ENCODE measurements at regions of chr3 and their contacts with region 1.

Region 1: DNA sequence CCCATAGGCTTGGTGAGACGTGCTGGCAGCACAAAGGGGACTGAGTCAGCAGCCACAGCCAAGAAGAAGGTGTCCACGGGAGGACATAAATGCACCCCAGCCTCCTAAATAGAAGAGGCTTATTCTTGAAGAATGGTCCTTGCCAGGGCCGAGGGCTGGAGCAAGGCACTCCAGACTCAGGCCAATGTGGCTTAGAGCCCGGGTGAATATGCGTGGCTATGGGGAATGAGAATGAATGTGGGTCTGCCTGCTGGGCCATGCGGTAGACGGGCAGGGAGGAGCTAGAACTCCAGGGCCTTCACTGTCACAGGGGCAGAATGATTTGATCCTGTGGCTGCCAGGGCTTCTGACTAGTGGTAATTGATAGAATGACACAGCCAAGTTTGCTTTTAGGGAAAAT is 34.0 kb downstream of the DHX30 start:
- DNase-seq: no peak
- H3K4me3 ChIP-seq: no peak overlapping the region
- H3K27ac ChIP-seq: no peak overlapping the region
- H3K4me1 ChIP-seq: no peaks in the 10 kb centered on the region
- H3K27me3 ChIP-seq: no peaks in the 10 kb centered on the region
- CTCF ChIP-seq: no peak
- EP300 ChIP-seq: no peak
- RAD21 ChIP-seq: no peak

Region 2: GRCh38 chr3:47824541-47825473 is 12.2 kb before region 1 on chr3:
- CTCF ChIA-PET with region 1: interaction called, 44 read pairs
- POLR2A ChIA-PET with region 1: interaction called, 8 read pairs
- DNase-seq: peak; percentile 98
- H3K4me3 ChIP-seq: peak overlapping the region; percentile 74 to 95
- H3K27ac ChIP-seq: peak overlapping the region; percentile 66 to 69
- H3K4me1 ChIP-seq: peaks cover 3 to 15% of the 10 kb centered on the region in 2 experiments; a peak in 1 of 4 replicates
- H3K27me3 ChIP-seq: no peaks in the 10 kb centered on the region
- CTCF ChIP-seq: peak; percentile 78
- EP300 ChIP-seq: no peak
- RAD21 ChIP-seq: peak; percentile 25; the same call in 1 of the 2 replicates

Region 3: GRCh38 chr3:47984097-47984728 is 147.2 kb after region 1 on chr3:
- CTCF ChIA-PET with region 1: interaction called, 55 read pairs
- POLR2A ChIA-PET with region 1: no interaction called
- DNase-seq: no peak
- H3K4me3 ChIP-seq: no peak overlapping the region
- H3K27ac ChIP-seq: peak overlapping the region in 1 of 2 experiments; percentile 71; a peak in 2 of 4 replicates
- H3K4me1 ChIP-seq: peaks cover 6 to 15% of the 10 kb centered on the region in 2 experiments; a peak in 3 of 4 replicates
- H3K27me3 ChIP-seq: no peaks in the 10 kb centered on the region
- CTCF ChIP-seq: no peak
- EP300 ChIP-seq: peak in 1 of 2 experiments; percentile 28; a peak in 1 of 4 replicates
- RAD21 ChIP-seq: no peak

Region 4: GRCh38 chr3:48001991-48002390 is 165.0 kb after region 1 on chr3:
- CTCF ChIA-PET with region 1: interaction called, 10 read pairs
- POLR2A ChIA-PET with region 1: no interaction called
- DNase-seq: no peak
- H3K4me3 ChIP-seq: no peak overlapping the region
- H3K27ac ChIP-seq: no peak overlapping the region
- H3K4me1 ChIP-seq: no peaks in the 10 kb centered on the region
- H3K27me3 ChIP-seq: no peaks in the 10 kb centered on the region
- CTCF ChIP-seq: no peak
- EP300 ChIP-seq: no peak
- RAD21 ChIP-seq: no peak

Region 5: GRCh38 chr3:48157950-48158376 is 321.0 kb after region 1 on chr3:
- CTCF ChIA-PET with region 1: interaction called, 85 read pairs
- POLR2A ChIA-PET with region 1: no interaction called
- DNase-seq: peak; percentile 52
- H3K4me3 ChIP-seq: no peak overlapping the region; a peak in 1 of 4 replicates
- H3K27ac ChIP-seq: no peak overlapping the region
- H3K4me1 ChIP-seq: no peaks in the 10 kb centered on the region; a peak in 1 of 4 replicates
- H3K27me3 ChIP-seq: no peaks in the 10 kb centered on the region
- CTCF ChIP-seq: peak; percentile 83
- EP300 ChIP-seq: no peak
- RAD21 ChIP-seq: peak; percentile 60